Posterior vena cava (tissue), 2 donors: ENCODE measurements at regions of chr16 and their contacts with region 1.

Region 1: DNA sequence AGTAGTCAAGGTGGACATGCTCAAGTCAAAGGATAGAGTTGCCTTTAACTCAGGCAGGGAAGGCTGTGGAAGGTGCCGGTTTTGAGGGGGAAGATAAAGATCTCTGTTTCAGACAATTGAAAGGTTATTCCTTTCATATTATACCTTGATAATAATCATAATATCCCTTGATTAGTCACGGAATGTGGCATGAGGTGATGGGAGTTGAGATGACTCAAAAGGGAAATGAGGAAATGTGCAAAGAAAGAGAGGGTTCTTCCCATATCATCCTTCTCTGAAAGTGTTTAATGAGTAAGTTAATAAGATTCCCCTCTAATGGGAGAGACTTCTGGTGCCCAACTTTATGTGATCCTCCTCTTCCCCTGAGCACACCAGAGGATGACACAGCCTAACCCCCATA is 43.1 kb upstream of the HS3ST2 start:
- DNase-seq: no peak

Region 2: GRCh38 chr16:22705799-22706198 is 65.1 kb before region 1 on chr16:
- intact Hi-C with region 1: loop called in 1 of 2 experiments (anchors 10 kb)
- DNase-seq: no peak

Region 3: GRCh38 chr16:22787466-22788189 is 16.8 kb after region 1 on chr16:
- intact Hi-C with region 1: no loop called
- DNase-seq: no peak